ENCODE measurements at regions of chrX and their contacts with region 1.

Region 1: DNA sequence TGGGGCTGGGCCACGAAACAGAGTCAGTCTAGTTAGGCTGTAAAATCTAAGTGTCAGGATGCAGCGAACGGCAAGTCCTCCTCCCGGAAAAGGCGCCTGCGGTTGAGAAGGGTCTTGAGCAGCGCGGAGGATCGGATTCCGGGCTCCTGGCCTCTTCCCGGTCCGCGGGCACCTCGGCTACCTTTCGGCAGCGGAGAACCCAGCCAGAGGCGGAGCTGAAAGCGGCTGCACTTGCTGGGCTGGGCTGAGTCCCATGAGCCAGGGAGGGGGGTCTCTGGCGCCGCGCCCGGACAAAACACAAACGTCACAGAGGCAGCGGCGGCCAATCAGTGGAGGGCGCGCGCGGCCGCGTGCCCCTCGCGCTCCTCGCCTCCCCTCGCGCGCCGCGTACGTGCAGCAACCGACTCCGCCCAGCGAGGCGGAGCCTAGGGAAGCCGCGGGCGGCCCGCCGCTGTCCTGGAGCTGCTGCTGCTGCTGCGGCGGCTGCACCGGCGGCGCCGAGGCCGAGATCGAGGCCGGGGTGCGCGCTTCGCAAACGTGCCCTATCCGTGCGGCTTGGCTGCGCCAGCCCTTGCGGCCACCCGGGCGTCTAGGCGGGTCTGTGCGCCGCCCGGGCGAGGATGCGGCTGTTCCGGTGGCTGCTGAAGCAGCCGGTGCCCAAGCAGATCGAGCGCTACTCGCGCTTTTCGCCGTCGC is at the start of gene PDK3:
- DNase-seq: peak; percentile 91
- ATAC-seq: peak; percentile 93
- H3K4me3 Mint-ChIP-seq: peak within 1 kb of the TSS; percentile 79
- H3K27ac Mint-ChIP-seq: peak within 1 kb of the TSS; percentile 88
- H3K4me1 Mint-ChIP-seq: peaks cover 38% of the 10 kb centered on the region
- H3K27me3 Mint-ChIP-seq: no peaks in the 10 kb centered on the region
- total RNA-seq, gene PDK3: 47.4 to 47.7 TPM

Region 2: DNA sequence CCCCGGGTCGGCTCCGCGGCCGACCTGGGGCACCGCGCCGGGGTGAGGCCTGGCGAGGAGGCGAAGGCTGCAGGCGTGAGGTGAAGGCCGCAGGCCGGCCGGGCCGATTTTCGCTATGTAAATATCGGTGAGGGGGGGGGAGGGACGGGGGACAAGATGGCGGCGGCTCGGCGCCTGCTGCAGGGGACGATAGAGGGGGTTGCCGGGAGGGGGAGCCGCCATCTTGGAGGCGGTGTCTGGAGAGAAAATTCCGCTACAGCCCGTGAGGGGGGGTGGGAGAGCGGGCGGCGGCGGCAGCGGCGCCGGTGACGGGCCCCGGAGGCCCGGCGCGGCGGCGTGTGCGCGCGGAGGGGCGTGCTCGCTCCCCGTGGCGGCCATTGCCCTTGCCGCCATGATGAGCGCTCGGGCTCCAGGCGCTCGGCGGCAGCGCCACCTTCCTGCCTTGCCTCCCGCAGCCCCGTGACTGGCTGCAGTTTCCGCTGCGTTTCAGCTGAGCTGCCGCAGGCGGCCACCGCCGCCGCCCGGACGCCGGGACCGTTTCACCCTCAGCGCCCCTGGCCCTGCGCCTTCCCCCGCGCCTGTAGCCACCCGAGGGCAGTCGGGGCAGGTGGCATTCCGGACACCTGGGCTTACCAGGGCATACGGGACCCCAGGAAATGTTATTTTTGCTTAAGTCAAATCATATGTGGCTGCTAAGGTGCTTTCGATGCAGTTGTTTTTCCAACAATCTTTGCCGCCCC is 314.8 kb before region 1 on chrX:
- CTCF ChIA-PET with region 1: no interaction called
- POLR2A ChIA-PET with region 1: no interaction called
- intact Hi-C with region 1: loop called in 1 of 2 experiments (anchors 5 kb)
- DNase-seq: peak; percentile 92
- ATAC-seq: peak; percentile 81
- H3K4me3 Mint-ChIP-seq: peak overlapping the region; percentile 93
- H3K27ac Mint-ChIP-seq: peak overlapping the region; percentile 97
- H3K4me1 Mint-ChIP-seq: peaks cover 50% of the 10 kb centered on the region
- H3K27me3 Mint-ChIP-seq: no peaks in the 10 kb centered on the region

Region 3: GRCh38 chrX:24332878-24333277 is 132.1 kb before region 1 on chrX:
- CTCF ChIA-PET with region 1: no interaction called
- POLR2A ChIA-PET with region 1: no interaction called
- intact Hi-C with region 1: no loop called
- DNase-seq: no peak
- ATAC-seq: no peak
- H3K4me3 Mint-ChIP-seq: no peak overlapping the region
- H3K27ac Mint-ChIP-seq: no peak overlapping the region
- H3K4me1 Mint-ChIP-seq: no peaks in the 10 kb centered on the region
- H3K27me3 Mint-ChIP-seq: peaks cover 4% of the 10 kb centered on the region

Region 4: DNA sequence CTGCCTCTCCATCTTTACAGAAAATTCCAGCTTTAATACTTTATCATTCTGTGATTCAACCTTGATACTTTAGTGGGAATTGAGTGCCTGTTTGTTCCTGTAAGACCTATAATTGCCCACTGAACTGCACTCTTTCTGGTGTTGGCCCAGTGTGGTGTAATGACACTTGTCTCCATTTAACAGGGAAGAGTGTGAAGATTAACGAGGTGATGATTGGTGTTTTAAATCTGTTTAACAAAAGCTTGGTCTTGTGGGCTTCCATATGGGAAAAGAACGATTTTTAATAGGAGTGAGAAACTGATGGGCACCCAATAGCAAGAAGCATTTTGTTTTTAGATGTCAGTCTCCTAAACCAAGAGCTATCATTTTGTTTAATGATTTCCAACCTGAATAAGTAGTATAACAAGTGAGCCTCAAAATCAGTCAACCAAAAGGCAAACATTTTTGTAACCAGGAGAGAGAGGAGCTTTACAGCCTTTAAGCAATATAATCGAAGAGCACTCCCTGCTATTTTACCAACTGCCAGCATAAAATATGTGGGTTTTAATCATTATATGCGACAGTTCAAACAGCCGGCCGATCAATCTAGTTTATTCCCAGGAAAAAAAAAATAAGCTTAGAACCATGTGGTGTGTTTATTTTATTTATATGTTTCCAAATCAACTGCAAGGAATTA is 54.3 kb before region 1 on chrX:
- CTCF ChIA-PET with region 1: no interaction called
- POLR2A ChIA-PET with region 1: no interaction called
- intact Hi-C with region 1: no loop called
- DNase-seq: no peak
- ATAC-seq: no peak
- H3K4me3 Mint-ChIP-seq: no peak overlapping the region
- H3K27ac Mint-ChIP-seq: no peak overlapping the region
- H3K4me1 Mint-ChIP-seq: no peaks in the 10 kb centered on the region
- H3K27me3 Mint-ChIP-seq: no peaks in the 10 kb centered on the region

Region 5: GRCh38 chrX:24479924-24480323 is 14.9 kb after region 1 on chrX:
- CTCF ChIA-PET with region 1: interaction called, 6 read pairs
- POLR2A ChIA-PET with region 1: interaction called, 4 read pairs
- intact Hi-C with region 1: loop called (anchors 1 to 2 kb)
- DNase-seq: peak; percentile 82
- ATAC-seq: peak; percentile 94
- H3K4me3 Mint-ChIP-seq: peak overlapping the region; percentile 68
- H3K27ac Mint-ChIP-seq: peak overlapping the region; percentile 91
- H3K4me1 Mint-ChIP-seq: peaks cover 75% of the 10 kb centered on the region
- H3K27me3 Mint-ChIP-seq: no peaks in the 10 kb centered on the region

Region 6: GRCh38 chrX:24498975-24499374 is 34.0 kb after region 1 on chrX:
- CTCF ChIA-PET with region 1: interaction called, 6 read pairs
- POLR2A ChIA-PET with region 1: interaction called, 5 read pairs
- intact Hi-C with region 1: loop called in 1 of 2 experiments (anchors 2 kb)
- DNase-seq: no peak
- ATAC-seq: peak; percentile 78
- H3K4me3 Mint-ChIP-seq: no peak overlapping the region
- H3K27ac Mint-ChIP-seq: peak overlapping the region; percentile 43
- H3K4me1 Mint-ChIP-seq: peaks cover 23% of the 10 kb centered on the region
- H3K27me3 Mint-ChIP-seq: no peaks in the 10 kb centered on the region

Region 7: DNA sequence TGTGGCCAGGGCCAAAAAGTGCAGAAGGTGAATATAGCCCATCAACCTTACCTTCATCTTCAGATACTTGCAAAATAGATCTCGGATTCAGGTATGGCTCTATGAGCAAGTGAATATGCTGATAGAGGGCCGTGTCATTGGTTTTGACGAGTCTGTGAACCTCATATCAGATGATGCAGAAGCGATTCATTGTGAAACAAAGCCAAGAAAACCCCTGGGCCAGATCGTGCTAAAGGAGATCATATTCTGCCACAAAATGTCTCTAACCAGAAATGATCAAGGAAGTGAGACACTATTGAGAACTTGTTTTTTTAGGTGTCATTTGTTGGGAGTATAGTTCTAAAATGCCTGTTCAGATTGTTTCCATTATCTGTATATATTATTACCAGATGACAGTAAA is 48.4 kb after region 1 on chrX:
- CTCF ChIA-PET with region 1: interaction called, 3 read pairs
- POLR2A ChIA-PET with region 1: no interaction called
- intact Hi-C with region 1: loop called in 1 of 2 experiments (anchors 2 kb)
- DNase-seq: peak; percentile 65
- ATAC-seq: peak; percentile 97
- H3K4me3 Mint-ChIP-seq: no peak overlapping the region
- H3K27ac Mint-ChIP-seq: peak overlapping the region; percentile 73
- H3K4me1 Mint-ChIP-seq: peaks cover 20% of the 10 kb centered on the region
- H3K27me3 Mint-ChIP-seq: no peaks in the 10 kb centered on the region

Region 8: GRCh38 chrX:24682739-24683432 is 217.9 kb after region 1 on chrX:
- CTCF ChIA-PET with region 1: no interaction called
- POLR2A ChIA-PET with region 1: no interaction called
- intact Hi-C with region 1: loop called in 1 of 2 experiments (anchors 5 kb)
- DNase-seq: peak; percentile 64
- ATAC-seq: peak; percentile 99
- H3K4me3 Mint-ChIP-seq: no peak overlapping the region
- H3K27ac Mint-ChIP-seq: peak overlapping the region; percentile 61
- H3K4me1 Mint-ChIP-seq: peaks cover 21% of the 10 kb centered on the region
- H3K27me3 Mint-ChIP-seq: peaks cover 5% of the 10 kb centered on the region

Measured in activated CD4-positive, alpha-beta T cell treated with anti-CD3 and anti-CD28 coated beads for 36 hours (primary cell).